ENCODE measurements at regions of chr1 and their contacts with region 1.

Region 1: DNA sequence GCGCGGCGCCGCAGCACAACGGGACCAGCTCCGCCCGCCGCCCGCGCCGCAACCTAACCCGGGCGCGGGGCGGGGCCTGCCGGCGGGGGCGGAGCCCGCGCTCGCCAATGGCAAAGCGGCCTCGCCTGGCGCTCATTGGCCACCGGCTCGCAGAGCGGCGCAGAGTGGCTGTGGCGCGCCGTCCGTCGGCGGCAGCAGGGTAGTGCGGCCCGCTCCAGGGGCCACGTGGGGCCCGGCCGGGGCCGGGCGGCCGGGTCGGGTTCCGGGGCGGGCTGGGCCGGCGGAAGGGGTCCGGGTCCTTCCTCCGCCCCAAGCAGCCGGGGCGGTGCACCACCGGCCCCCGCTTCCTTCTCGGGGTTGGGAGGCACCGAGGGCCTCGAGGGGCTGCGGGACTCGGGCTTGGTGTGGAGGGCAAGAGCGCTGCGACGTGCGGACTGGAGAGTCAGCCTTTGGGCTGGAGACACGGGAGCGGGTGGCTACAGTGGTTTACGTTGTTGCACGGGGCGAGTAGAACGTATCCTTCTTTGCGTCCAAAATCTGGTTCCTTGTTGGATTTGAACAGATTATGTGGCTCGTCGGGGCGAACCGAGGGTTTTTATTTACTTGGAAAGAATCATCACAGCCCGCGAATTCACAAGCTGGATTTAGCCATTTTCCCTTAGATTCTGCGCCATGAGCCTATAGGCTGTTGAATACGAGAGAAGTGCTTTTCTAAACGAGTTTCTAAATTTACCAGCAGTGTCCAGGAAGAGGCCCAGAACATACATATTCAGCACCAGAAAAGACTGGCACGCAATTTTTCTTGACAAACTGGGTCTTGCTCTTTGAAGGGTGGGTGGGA is at the start of gene SRM:
- DNase-seq: peak; percentile 98
- CTCF ChIP-seq: peak; percentile 14

Region 2: DNA sequence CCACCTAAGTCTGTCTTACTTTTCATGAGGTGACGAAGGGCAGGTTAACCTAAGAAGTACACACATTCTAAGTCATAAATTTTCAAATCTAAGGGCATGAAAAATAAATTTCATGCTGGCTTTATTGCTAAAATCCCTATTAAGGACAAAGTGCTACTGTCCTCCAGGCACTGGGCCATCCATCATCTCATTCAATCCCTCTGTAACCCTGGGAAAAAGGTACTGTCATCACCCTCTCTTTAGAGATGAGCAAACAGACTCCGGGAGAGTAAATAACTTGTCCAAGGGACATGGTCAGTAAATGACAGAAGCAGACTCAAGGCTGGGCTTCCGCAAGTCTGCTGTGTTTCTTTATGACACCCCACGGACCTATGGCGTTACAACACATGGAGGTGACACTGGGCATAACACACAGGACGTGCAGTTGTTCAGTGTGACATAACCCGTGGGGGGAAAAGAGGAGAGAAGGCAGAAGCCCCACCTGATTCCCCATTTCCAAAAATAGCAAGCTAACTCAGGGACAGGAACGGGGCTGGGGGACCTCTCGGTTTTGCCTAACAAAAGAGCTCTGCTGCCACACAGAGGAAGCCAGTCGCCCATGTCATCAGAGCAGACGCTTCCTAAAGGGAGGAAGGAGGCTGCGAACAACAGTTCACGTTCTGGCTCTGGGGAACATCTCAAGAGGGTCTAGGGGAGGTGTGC is 12.2 kb after region 1 on chr1:
- CTCF ChIA-PET with region 1: interaction called, 39 read pairs
- POLR2A ChIA-PET with region 1: interaction called, 4 read pairs
- DNase-seq: peak; percentile 64
- CTCF ChIP-seq: peak; percentile 43

Region 3: GRCh38 chr1:11248155-11248554 is 187.9 kb after region 1 on chr1:
- CTCF ChIA-PET with region 1: no interaction called
- POLR2A ChIA-PET with region 1: no interaction called
- DNase-seq: no peak
- CTCF ChIP-seq: peak; percentile 16